ENCODE measurements at regions of chr3 and their contacts with region 1.

Region 1: DNA sequence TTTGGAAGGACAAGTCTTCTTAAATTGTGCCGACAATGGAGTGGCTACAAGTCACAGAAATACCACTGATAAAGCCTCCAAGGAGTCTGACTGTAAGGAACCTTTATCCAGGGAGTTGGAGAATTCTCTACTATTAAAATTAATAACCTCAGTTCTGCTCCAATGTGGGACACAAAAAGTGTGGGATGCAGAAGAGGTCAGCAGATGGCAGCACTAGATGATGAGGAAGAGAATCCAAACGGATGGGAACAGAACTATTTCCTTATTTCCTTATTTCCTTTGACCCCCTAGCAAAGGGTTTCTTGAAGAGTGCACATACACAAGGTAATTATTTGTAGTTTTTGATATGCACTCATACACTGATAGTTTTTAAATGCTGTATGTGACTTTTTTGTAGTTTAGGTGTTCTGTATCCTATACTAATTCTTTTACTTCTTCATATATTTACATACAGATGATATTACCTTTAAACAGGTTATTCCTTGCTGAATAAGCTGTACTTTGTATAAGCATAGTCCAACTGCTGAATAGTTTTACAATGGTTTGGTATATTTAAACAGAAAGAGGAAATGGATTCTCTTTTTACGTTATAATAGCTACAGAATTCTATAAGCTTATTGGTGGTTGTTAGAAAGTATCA is 25.6 kb upstream of the NLGN1 start:
- DNase-seq: peak in 1 of 2 donors; percentile 13
- ATAC-seq: no peak

Region 2: DNA sequence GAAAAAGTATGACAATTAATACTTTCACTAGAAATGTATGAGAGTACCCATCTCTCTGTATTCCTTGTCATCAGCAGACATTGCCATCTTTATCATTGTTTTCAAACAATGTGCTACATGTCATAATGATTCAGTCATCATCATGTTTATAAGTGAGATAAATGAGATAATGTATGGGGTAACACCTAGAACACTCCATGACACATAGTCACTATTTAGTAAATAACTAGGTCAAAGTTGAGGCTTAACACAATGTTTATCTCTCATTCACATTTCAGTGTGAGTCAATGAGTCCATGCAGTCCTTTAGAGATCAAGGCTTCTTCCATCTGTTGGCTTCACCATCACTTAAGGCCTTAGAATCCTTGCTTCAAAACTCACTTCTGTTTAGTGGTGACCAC is 95.5 kb after region 1 on chr3:
- intact Hi-C with region 1: no loop called
- DNase-seq: no peak
- ATAC-seq: no peak

Region 3: DNA sequence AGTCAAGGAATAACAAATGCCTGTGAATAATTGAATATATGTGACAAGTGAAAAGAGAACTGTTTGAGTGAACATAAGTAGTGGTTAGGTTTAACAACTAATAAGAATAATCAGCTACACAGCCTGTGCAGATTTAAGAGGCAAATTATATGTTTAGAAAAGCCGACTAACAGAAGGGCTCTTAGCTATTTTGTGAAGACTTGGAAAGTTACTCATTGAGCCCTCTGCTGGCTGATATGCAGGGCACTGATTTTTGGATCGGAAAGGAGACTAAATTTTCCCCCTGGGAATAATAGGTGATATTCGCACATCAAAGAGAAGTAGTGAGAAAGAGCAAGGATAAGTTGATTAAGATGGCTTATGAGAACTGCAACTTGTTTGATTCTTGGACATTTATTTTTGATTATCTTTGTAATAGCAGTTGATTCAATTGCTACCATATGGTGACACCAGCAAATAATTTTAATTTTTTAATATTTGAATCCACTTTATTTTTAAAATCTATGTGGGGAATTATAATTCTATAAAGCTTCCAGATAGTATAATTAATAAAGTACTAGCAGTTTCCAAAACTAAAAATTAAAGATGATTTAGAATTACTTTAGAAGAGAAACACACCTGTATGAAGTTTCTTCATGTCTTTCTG is 181.8 kb after region 1 on chr3:
- intact Hi-C with region 1: loop called in 1 of 2 experiments (anchors 5 kb)
- DNase-seq: no peak
- ATAC-seq: no peak

Region 4: GRCh38 chr3:174330303-174330702 is 958.3 kb after region 1 on chr3:
- intact Hi-C with region 1: no loop called
- DNase-seq: no peak
- ATAC-seq: no peak